ENCODE measurements at regions of chr16 and their contacts with region 1.

Region 1: GRCh38 chr16:31472709-31473203 is 804 bp downstream of the TGFB1I1 start:
- DNase-seq: peak; percentile 90
- H3K4me3 ChIP-seq: peak overlapping the region; percentile 60 to 72 (median 69)
- H3K27ac ChIP-seq: peak overlapping the region; percentile 40
- H3K4me1 ChIP-seq: peaks cover 8% of the 10 kb centered on the region
- H3K27me3 ChIP-seq: no peaks in the 10 kb centered on the region
- CTCF ChIP-seq: peak; percentile 84

Region 2: DNA sequence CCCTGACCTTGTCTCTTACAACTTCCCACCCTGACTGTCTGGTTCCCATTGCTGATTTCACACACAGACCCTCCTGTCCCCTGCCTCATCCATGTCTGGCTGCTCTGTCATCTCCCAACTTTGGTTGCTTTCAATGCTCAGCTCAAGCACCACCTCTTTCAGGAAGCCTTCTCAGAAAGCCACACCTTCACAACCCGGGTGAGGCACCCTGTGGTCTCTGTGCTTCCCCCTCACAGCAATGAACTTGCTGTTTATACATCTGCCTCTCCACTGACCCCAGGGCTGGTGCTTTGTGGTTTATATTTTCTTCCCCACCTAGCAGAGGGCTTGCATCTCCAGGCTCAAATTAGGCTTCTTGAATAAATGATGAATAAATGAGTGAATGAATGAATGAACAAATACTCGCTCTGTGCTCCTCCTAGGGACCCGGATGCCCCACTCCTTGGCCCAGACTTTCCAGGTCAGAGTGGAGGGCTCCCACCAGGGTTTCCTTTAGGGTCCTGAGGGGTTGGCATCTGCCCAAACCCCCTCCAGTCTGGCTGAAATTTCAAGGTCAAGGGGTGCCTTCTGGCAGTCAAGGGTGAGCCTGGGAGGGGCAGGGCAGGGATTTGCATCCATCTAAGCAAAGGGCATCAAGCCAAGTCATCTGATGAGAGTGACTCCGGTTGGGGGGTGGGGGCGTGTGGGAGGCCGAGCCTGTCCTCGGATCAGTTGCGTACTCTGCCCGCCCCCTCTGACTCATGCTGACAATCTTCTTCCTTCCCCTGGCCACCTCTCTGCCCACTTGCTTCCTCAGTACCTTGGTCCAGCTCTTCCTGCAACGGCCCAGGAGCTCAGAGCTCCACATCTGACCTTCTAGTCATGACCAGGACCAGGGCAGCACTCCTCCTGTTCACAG is 118.1 kb before region 1 on chr16 and contains the start of gene ITGAX:
- CTCF ChIA-PET with region 1: no interaction called
- dilution Hi-C with region 1: no loop called
- in situ Hi-C with region 1: no loop called
- intact Hi-C with region 1: no loop called
- DNase-seq: peak; percentile 32
- H3K4me3 ChIP-seq: no peak within 1 kb of the TSS
- H3K27ac ChIP-seq: no peak within 1 kb of the TSS
- H3K4me1 ChIP-seq: peaks cover 6% of the 10 kb centered on the region
- H3K27me3 ChIP-seq: no peaks in the 10 kb centered on the region
- CTCF ChIP-seq: no peak
- total RNA-seq, gene ITGAX: 0.16 TPM in 1 of 2 donors, not detected in the other

Region 3: GRCh38 chr16:31421587-31421986 is 51.2 kb before region 1 on chr16:
- CTCF ChIA-PET with region 1: interaction called, 12 read pairs
- dilution Hi-C with region 1: no loop called
- in situ Hi-C with region 1: no loop called
- intact Hi-C with region 1: no loop called
- DNase-seq: peak; percentile 61
- H3K4me3 ChIP-seq: no peak overlapping the region
- H3K27ac ChIP-seq: no peak overlapping the region
- H3K4me1 ChIP-seq: no peaks in the 10 kb centered on the region
- H3K27me3 ChIP-seq: peaks cover 2% of the 10 kb centered on the region
- CTCF ChIP-seq: no peak

Region 4: DNA sequence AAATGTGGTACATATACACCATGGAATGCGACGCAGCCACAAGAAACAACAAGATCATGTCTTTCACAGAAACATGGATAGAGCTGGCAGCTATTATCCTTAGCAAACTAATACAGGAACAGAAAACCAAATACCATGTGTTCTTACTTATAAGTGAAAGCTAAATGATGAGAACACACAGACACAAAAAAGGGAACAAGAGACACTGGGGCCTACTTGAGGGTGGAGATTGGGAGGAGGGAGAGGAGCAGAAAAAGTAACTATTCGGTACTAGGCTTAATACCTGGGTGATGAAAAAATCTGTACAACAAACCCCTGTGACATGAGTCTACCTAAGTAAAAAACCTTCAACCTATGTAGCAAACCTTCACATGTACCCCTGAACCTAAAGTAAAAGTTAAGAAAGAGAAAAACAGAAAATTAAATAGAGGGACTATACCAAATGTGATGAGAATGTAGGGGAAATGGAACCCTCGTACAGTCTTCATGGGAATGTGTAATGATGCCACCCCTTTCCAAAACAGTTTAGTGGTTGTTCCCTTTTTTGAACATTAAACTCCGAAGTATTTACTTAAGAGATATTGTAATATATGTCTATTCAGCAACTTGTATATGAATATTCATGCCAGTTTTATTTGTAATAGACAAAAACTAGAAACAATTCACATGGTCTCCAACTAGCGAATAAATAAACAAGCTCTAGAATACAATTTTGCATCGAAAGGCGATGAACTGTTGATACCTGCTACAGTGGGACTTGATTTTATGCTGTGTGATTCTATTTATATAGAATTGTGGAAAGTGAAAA is 88.9 kb after region 1 on chr16:
- CTCF ChIA-PET with region 1: no interaction called
- dilution Hi-C with region 1: no loop called
- in situ Hi-C with region 1: no loop called
- intact Hi-C with region 1: no loop called
- DNase-seq: no peak
- H3K4me3 ChIP-seq: no peak overlapping the region
- H3K27ac ChIP-seq: no peak overlapping the region
- H3K4me1 ChIP-seq: no peaks in the 10 kb centered on the region
- H3K27me3 ChIP-seq: no peaks in the 10 kb centered on the region
- CTCF ChIP-seq: no peak

Measured in mammary epithelial cell (primary cell).